ENCODE measurements at regions of chr14 and their contacts with region 1.

Region 1: GRCh38 chr14:61475316-61475715 is 153.9 kb downstream of the PRKCH start:
- DNase-seq: no peak
- ATAC-seq: no peak
- H3K4me3 Mint-ChIP-seq: peak overlapping the region; percentile 12
- H3K27ac Mint-ChIP-seq: peak overlapping the region; percentile 84
- H3K4me1 Mint-ChIP-seq: peaks cover 94% of the 10 kb centered on the region
- H3K27me3 Mint-ChIP-seq: no peaks in the 10 kb centered on the region

Region 2: GRCh38 chr14:61456720-61457119 is 18.6 kb before region 1 on chr14:
- CTCF ChIA-PET with region 1: interaction called, 136 read pairs
- POLR2A ChIA-PET with region 1: interaction called, 18 read pairs
- DNase-seq: peak; percentile 89
- ATAC-seq: peak; percentile 22
- H3K4me3 Mint-ChIP-seq: no peak overlapping the region
- H3K27ac Mint-ChIP-seq: peak overlapping the region; percentile 79
- H3K4me1 Mint-ChIP-seq: peaks cover 91% of the 10 kb centered on the region
- H3K27me3 Mint-ChIP-seq: no peaks in the 10 kb centered on the region

Region 3: DNA sequence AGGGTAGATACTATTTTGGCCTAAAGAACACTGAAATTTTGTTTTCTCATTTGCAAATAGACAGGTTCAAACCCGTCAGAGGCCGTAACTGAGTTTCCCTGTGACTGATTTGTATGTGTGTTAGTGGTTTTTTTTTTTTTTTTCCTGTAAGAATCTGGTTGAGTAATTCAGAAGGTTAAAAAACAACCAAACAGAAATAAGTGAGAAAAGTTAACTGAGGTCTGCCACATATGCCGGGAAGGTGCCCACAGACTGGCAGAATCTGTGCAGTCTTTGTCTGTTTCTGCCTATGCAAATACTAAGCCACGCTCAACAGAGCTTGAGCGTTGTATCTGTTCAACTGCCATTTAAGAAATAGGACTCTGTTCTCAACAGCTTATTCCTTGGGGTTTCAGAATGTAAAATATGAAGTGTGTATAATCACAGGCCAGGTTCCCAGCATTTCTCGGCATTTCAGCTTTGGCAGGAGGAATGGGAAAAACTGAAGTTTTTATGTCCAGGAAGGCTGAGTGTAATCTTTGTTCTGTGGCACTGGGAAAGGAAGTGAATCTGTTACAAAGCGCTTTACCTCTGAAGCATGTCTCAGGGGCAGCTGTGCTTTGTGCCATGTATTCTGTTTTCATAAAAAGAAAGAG is 28.0 kb after region 1 on chr14:
- CTCF ChIA-PET with region 1: interaction called, 88 read pairs
- POLR2A ChIA-PET with region 1: interaction called, 30 read pairs
- DNase-seq: peak; percentile 66
- ATAC-seq: peak; percentile 82
- H3K4me3 Mint-ChIP-seq: peak overlapping the region; percentile 73
- H3K27ac Mint-ChIP-seq: peak overlapping the region; percentile 97
- H3K4me1 Mint-ChIP-seq: peaks cover 89% of the 10 kb centered on the region
- H3K27me3 Mint-ChIP-seq: no peaks in the 10 kb centered on the region

Region 4: GRCh38 chr14:61525293-61526011 is 50.1 kb after region 1 on chr14:
- CTCF ChIA-PET with region 1: interaction called, 38 read pairs
- POLR2A ChIA-PET with region 1: interaction called, 3 read pairs
- DNase-seq: peak; percentile 78
- ATAC-seq: peak; percentile 80
- H3K4me3 Mint-ChIP-seq: peak overlapping the region; percentile 46
- H3K27ac Mint-ChIP-seq: peak overlapping the region; percentile 86
- H3K4me1 Mint-ChIP-seq: peaks cover 86% of the 10 kb centered on the region
- H3K27me3 Mint-ChIP-seq: no peaks in the 10 kb centered on the region

Region 5: DNA sequence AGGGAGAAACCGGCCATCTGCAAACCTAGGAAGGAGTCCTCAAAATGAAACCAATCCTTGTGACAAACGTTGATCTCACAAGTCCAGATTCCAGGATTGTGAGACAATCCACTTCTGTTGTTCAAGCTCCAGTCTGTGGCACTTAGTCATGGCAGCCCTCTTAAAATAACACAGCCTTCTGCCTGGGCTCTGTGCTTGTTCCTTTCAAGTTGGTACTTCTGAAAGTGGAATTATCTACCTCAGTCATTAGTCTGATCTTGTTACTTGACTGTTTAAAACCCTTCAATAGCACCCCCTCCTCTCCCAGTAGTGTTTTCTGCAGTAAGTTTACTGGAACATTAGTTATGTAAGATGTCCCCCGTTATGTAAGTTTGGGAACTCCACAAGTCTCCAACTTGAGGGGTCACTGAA is 109.0 kb after region 1 on chr14:
- CTCF ChIA-PET with region 1: no interaction called
- POLR2A ChIA-PET with region 1: no interaction called
- DNase-seq: no peak
- ATAC-seq: no peak
- H3K4me3 Mint-ChIP-seq: no peak overlapping the region
- H3K27ac Mint-ChIP-seq: no peak overlapping the region
- H3K4me1 Mint-ChIP-seq: peaks cover 31% of the 10 kb centered on the region
- H3K27me3 Mint-ChIP-seq: no peaks in the 10 kb centered on the region

Region 6: GRCh38 chr14:61710853-61711817 is 235.8 kb after region 1 on chr14:
- CTCF ChIA-PET with region 1: interaction called, 10 read pairs
- POLR2A ChIA-PET with region 1: no interaction called
- DNase-seq: no peak
- ATAC-seq: peak; percentile 40
- H3K4me3 Mint-ChIP-seq: no peak overlapping the region
- H3K27ac Mint-ChIP-seq: no peak overlapping the region
- H3K4me1 Mint-ChIP-seq: peaks cover 81% of the 10 kb centered on the region
- H3K27me3 Mint-ChIP-seq: no peaks in the 10 kb centered on the region

Region 7: GRCh38 chr14:61730756-61731373 is 255.5 kb after region 1 on chr14:
- CTCF ChIA-PET with region 1: interaction called, 14 read pairs
- POLR2A ChIA-PET with region 1: interaction called, 3 read pairs
- DNase-seq: no peak
- ATAC-seq: no peak
- H3K4me3 Mint-ChIP-seq: no peak overlapping the region
- H3K27ac Mint-ChIP-seq: no peak overlapping the region
- H3K4me1 Mint-ChIP-seq: peaks cover 40% of the 10 kb centered on the region
- H3K27me3 Mint-ChIP-seq: no peaks in the 10 kb centered on the region

Measured in activated CD8-positive, alpha-beta T cell treated with anti-CD3 and anti-CD28 coated beads, Interleukin-2, amount 10 ng/mL, durations not matched to agents 7 days and 5 days (primary cell).